GM10248 (cell line): ENCODE measurements at regions of chr2 and their contacts with region 1.

Region 1: DNA sequence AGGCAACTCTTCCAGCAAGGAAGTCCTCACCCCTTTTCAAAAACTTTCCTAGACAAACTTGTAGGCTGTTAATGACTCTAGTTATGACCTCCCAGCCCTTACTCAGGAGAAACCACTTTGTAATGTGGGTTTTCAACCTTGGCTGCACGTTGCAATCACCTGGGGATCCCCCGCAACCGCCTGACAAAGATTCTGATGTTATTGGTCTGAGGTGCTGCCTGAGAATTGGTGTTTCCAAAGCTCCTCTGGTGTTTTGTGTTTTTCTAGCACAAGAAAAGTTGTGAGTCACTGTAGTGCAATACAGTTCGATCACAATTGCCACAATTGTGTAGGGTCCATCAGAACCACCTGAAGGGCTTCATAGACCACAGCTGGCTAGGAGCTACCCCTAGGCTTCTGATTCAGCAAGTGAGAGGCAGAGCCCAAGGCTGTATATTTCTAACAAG is 121.6 kb downstream of the SP100 start:
- DNase-seq: peak; percentile 61
- CTCF ChIP-seq: no peak

Region 2: DNA sequence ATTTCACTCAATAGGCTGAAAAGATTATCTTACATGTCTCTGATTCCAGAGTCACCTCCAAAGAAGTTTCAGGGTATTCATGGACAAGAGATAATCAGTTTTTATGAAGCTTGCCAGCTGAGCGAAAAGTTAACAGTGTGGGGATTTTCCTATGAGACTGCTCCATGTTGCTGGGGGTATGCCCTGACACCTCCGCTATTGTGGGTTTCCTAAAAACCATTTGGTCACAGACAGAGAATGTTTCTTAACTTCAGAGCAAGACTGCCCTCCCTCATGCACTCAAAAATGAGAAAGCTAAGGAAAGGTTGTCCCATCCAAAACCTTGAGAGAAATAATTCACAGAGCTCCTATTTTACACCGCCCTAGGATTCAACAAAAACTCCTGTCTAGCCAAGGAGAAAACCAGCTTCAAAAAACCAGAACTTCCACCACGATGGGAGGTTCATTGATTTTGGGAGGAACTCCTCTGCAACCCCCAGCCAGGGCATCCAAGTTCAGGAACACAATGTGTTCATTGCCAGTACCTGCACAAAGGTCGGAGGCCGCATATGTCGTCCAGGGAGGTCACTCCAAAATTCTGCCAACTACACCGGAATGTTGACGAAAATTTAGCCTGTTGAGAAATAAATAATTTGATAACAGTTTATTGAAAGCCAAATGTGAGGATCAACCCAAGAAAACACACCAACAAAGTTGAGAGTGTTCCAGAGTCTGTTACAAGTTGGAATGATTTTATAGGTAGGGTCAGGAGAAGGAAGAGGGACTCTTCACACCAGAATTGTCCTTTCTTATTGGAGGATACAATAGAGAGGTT is 17.3 kb before region 1 on chr2:
- CTCF ChIA-PET with region 1: no interaction called
- POLR2A ChIA-PET with region 1: no interaction called
- DNase-seq: no peak
- CTCF ChIP-seq: no peak

Region 3: GRCh38 chr2:230552181-230552580 is 14.6 kb after region 1 on chr2:
- CTCF ChIA-PET with region 1: interaction called, 11 read pairs
- POLR2A ChIA-PET with region 1: no interaction called
- DNase-seq: no peak
- CTCF ChIP-seq: no peak